ENCODE measurements at regions of chr12 and their contacts with region 1.

Region 1: DNA sequence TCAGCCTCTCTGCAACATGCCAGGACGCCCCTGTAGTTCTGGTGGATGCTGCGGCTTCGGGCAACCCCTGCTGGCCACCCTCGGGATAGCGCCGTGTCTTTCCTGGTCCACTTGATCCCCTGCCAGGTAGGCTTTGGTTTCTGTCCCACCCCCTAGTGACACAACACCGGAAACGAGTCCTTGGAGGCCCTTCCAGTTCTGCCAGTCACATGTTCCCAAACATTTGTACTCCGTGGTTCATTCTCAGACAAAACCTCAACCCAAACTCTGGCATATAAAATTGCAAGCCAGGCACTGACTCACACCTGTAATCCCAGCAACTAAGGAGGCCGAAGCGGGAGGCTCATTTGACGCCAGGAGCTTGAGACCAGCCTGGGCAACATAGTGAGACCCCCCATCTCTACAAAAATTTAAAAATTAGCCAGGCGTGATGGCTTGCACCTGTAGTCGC is 37.1 kb downstream of the RASAL1 start:
- DNase-seq: peak; percentile 76 to 92 (median 86)
- H3K4me3 ChIP-seq: peak overlapping the region in 42 of 59 donors; percentile 4 to 61 (median 36)
- H3K27ac ChIP-seq: peak overlapping the region; percentile 33 to 94 (median 84)
- H3K27me3 ChIP-seq: peaks cover 0 to under 1% (median 0%) of the 10 kb centered on the region in 45 donors
- CTCF ChIP-seq: peak; percentile 39 to 93 (median 82)

Region 2: GRCh38 chr12:113152835-113153814 is 54.7 kb after region 1 on chr12:
- intact Hi-C with region 1: loop called (anchors 5 kb)
- DNase-seq: peak; percentile 66 to 87 (median 74)
- H3K4me3 ChIP-seq: peak overlapping the region; percentile 30 to 74 (median 55)
- H3K27ac ChIP-seq: peak overlapping the region in 29 of 59 donors; percentile 1 to 78 (median 55)
- H3K27me3 ChIP-seq: peaks cover 0 to 12% (median 0%) of the 10 kb centered on the region in 45 donors
- CTCF ChIP-seq: peak; percentile 35 to 91 (median 73)

Region 3: GRCh38 chr12:113831016-113831415 is 732.5 kb after region 1 on chr12:
- intact Hi-C with region 1: no loop called
- DNase-seq: no peak
- H3K4me3 ChIP-seq: no peak overlapping the region
- H3K27ac ChIP-seq: no peak overlapping the region
- H3K27me3 ChIP-seq: no peaks in the 10 kb centered on the region
- CTCF ChIP-seq: no peak